ENCODE measurements at regions of chr11 and their contacts with region 1.

Region 1: GRCh38 chr11:106482917-106483785 is 405.7 kb downstream of the AASDHPPT start:
- DNase-seq: no peak
- ATAC-seq: no peak
- H3K4me3 ChIP-seq: no peak overlapping the region
- H3K4me3 Mint-ChIP-seq: no peak overlapping the region
- H3K27ac ChIP-seq: no peak overlapping the region
- H3K27ac Mint-ChIP-seq: no peak overlapping the region
- H3K4me1 ChIP-seq: no peaks in the 10 kb centered on the region
- H3K4me1 Mint-ChIP-seq: no peaks in the 10 kb centered on the region
- H3K27me3 ChIP-seq: no peaks in the 10 kb centered on the region
- H3K27me3 Mint-ChIP-seq: no peaks in the 10 kb centered on the region

Region 2: DNA sequence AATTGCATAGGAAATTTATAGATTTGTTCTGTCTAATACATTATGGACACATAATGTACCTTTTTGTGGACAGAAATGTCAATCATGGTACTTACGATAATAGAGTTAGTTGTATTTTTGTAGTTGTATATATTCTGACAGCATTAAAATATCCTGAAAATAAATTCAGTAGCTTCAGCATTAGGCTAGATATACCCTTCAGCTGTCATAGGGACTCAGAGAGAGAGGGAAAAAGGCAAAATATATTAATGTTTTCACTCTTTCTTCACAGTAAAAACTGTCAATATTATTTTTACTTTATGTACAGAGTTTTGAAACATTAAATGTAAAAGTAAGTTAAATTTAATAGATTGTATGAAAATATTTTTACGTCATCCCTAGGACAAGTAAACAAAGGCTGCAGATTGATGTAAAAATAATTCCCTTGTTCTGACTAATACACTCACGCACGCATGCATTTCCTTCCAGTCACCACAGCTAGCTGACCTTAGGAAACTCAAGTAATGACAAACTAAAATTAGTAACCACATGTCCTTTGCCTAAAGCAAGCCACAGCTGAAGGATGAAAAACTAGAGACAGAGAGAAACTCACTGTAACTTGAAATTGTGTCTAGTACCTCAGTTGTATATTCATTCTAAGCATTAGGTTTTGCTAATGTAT is 1238.9 kb before region 1 on chr11:
- CTCF ChIA-PET with region 1: interaction called in 1 of 2 experiments, 10 read pairs
- POLR2A ChIA-PET with region 1: no interaction called
- DNase-seq: no peak
- ATAC-seq: no peak
- H3K4me3 ChIP-seq: no peak overlapping the region
- H3K4me3 Mint-ChIP-seq: no peak overlapping the region
- H3K27ac ChIP-seq: no peak overlapping the region
- H3K27ac Mint-ChIP-seq: no peak overlapping the region
- H3K4me1 ChIP-seq: no peaks in the 10 kb centered on the region
- H3K4me1 Mint-ChIP-seq: no peaks in the 10 kb centered on the region
- H3K27me3 ChIP-seq: no peaks in the 10 kb centered on the region
- H3K27me3 Mint-ChIP-seq: peaks cover 2 to 7% of the 10 kb centered on the region in 2 donors